Naive thymus-derived CD4-positive, alpha-beta T cell (primary cell): ENCODE measurements at regions of chr19 and their contacts with region 1.

Region 1: DNA sequence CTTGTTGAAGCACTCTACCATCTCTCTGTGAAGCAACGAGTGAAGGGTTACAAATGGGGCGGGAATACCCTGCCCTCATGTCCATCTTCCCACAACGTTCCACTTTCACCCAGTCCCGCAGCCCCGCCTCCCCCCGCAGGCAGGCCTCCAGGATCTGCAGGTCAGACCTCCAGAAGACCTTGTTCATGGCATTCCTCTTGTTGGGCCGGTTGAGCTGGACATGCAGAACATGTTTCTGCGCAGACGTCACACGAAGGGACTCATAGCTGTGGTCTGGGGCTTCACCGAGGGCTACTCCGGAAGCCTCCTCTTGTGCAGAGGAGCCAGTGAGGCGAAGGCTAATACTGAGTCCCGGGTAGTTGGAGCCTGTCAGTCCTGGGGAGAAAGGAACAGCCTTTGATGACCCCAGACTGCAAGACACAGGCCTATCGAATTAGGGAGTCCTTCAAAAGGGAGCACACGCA is 420 bp downstream of the ECH1 start:
- DNase-seq: peak in 1 of 9 donors; percentile 48
- ATAC-seq: peak; percentile 20
- H3K4me3 ChIP-seq: peak overlapping the region; percentile 80
- H3K4me3 Mint-ChIP-seq: peak overlapping the region; percentile 90 to 97 (median 94)
- H3K27ac ChIP-seq: peak overlapping the region; percentile 84
- H3K27ac Mint-ChIP-seq: peak overlapping the region; percentile 78 to 97 (median 92)
- H3K4me1 ChIP-seq: peaks cover 12 to 21% of the 10 kb centered on the region in 2 donors
- H3K4me1 Mint-ChIP-seq: peaks cover 14 to 54% (median 38%) of the 10 kb centered on the region in 7 donors
- H3K27me3 ChIP-seq: no peaks in the 10 kb centered on the region
- H3K27me3 Mint-ChIP-seq: no peaks in the 10 kb centered on the region

Region 2: GRCh38 chr19:38618590-38619360 is 212.4 kb before region 1 on chr19 and contains the start of gene EIF3K:
- CTCF ChIA-PET with region 1: interaction called, 3 read pairs
- POLR2A ChIA-PET with region 1: no interaction called
- intact Hi-C with region 1: loop called in 1 of 2 experiments (anchors 1 kb)
- DNase-seq: peak; percentile 94 to 99 (median 96)
- ATAC-seq: peak; percentile 86
- H3K4me3 ChIP-seq: peak within 1 kb of the TSS; percentile 96
- H3K4me3 Mint-ChIP-seq: peak within 1 kb of the TSS; percentile 95 to 100 (median 98)
- H3K27ac ChIP-seq: peak within 1 kb of the TSS; percentile 99
- H3K27ac Mint-ChIP-seq: peak within 1 kb of the TSS; percentile 89 to 100 (median 97)
- H3K4me1 ChIP-seq: peaks cover 33 to 40% of the 10 kb centered on the region in 2 donors
- H3K4me1 Mint-ChIP-seq: peaks cover 38 to 61% (median 44%) of the 10 kb centered on the region in 7 donors
- H3K27me3 ChIP-seq: no peaks in the 10 kb centered on the region
- H3K27me3 Mint-ChIP-seq: no peaks in the 10 kb centered on the region
- total RNA-seq, gene EIF3K: 294 to 405 (median 337) TPM

Region 3: DNA sequence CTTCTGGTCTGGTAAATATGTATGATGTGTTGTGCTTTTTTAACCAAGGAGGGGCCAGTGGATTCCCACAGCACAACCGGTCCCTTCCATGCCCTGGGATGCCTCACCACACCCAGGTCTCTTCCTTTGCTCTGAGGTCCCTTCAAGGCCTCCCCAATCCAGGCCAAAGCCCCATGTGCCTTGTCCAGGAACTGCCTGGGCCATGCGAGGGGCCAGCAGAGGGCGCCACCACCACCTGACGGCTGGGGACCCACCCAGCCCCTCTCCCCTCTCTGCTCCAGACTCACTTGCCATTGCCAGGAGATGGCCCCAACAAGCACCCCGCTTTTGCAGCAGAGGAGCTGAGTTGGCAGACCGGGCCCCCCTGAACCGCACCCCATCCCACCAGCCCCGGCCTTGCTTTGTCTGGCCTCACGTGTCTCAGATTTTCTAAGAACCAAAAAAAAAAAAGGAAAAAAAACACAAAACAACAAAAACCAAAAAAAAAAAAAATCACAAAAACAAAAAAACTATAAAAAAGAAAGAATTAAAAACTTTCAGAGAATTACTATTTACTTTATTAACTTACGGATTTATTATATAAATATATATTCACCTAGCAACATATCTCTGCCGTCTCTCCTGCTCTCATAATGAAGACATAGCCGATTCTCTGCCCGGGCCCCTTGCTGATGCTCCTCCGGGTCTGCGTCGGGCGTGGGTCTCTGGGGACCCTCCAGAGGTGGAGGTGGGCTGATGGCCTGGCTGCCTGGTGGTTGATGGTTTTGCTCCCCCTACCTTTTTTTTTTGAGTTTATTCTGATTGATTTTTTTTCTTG is 101.3 kb before region 1 on chr19:
- CTCF ChIA-PET with region 1: no interaction called
- POLR2A ChIA-PET with region 1: no interaction called
- intact Hi-C with region 1: loop called (anchors 2 to 5 kb)
- DNase-seq: peak; percentile 58 to 83 (median 73)
- ATAC-seq: peak; percentile 78
- H3K4me3 ChIP-seq: no peak overlapping the region
- H3K4me3 Mint-ChIP-seq: no peak overlapping the region
- H3K27ac ChIP-seq: no peak overlapping the region
- H3K27ac Mint-ChIP-seq: peak overlapping the region in 3 of 9 donors; percentile 23 to 48 (median 30)
- H3K4me1 ChIP-seq: peaks cover 9 to 10% of the 10 kb centered on the region in 2 donors
- H3K4me1 Mint-ChIP-seq: peaks cover 5 to 39% (median 13%) of the 10 kb centered on the region in 7 donors
- H3K27me3 ChIP-seq: no peaks in the 10 kb centered on the region
- H3K27me3 Mint-ChIP-seq: no peaks in the 10 kb centered on the region

Region 4: DNA sequence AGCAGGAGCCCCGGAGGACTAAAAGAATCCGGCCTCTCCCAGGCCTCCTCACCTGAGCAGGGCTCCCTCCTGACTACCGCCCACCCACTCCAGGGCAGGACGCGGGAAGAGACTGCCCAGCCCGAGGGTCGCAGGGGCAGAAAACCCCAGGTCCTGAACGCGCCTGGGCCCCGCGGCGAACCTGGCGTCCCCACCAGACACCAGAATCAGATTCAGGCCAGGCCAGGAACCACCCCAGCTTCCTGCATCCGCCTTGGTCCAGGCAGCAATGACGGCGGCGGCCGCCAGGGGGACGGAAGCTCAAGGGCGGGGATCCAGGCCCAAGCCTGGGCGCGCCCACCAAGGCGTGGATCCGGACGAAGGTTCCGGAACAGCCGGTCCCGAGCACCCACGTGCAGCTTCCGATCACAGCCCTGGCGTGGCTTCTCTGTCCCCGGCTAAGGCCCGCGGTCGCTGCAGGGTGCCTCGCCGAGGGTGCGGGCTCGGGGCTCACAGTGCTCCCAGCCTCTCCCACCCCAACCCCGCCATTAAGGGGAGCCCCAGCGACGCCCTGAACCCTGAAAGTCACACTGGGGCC is 61.5 kb before region 1 on chr19:
- CTCF ChIA-PET with region 1: no interaction called
- POLR2A ChIA-PET with region 1: interaction called, 6 read pairs
- intact Hi-C with region 1: loop called (anchors 2 to 5 kb)
- DNase-seq: peak; percentile 81 to 97 (median 86)
- ATAC-seq: peak; percentile 93
- H3K4me3 ChIP-seq: peak overlapping the region; percentile 33
- H3K4me3 Mint-ChIP-seq: peak overlapping the region; percentile 30 to 74 (median 61)
- H3K27ac ChIP-seq: peak overlapping the region; percentile 52
- H3K27ac Mint-ChIP-seq: peak overlapping the region; percentile 56 to 90 (median 83)
- H3K4me1 ChIP-seq: peaks cover 0 to 5% of the 10 kb centered on the region in 2 donors
- H3K4me1 Mint-ChIP-seq: peaks cover 0 to 10% (median 6%) of the 10 kb centered on the region in 7 donors
- H3K27me3 ChIP-seq: no peaks in the 10 kb centered on the region
- H3K27me3 Mint-ChIP-seq: no peaks in the 10 kb centered on the region

Region 5: GRCh38 chr19:38849860-38850435 is 18.8 kb after region 1 on chr19 and contains the start of gene HNRNPL:
- CTCF ChIA-PET with region 1: interaction called, 4 read pairs
- POLR2A ChIA-PET with region 1: interaction called, 34 read pairs
- intact Hi-C with region 1: loop called (anchors 1 kb)
- DNase-seq: peak; percentile 99 to 100 (median 100)
- ATAC-seq: peak; percentile 78
- H3K4me3 ChIP-seq: peak within 1 kb of the TSS; percentile 81
- H3K4me3 Mint-ChIP-seq: peak within 1 kb of the TSS; percentile 88 to 99 (median 96)
- H3K27ac ChIP-seq: peak within 1 kb of the TSS; percentile 96
- H3K27ac Mint-ChIP-seq: peak within 1 kb of the TSS; percentile 94 to 100 (median 99)
- H3K4me1 ChIP-seq: peaks cover 24 to 41% of the 10 kb centered on the region in 2 donors
- H3K4me1 Mint-ChIP-seq: peaks cover 30 to 67% (median 50%) of the 10 kb centered on the region in 7 donors
- H3K27me3 ChIP-seq: no peaks in the 10 kb centered on the region
- H3K27me3 Mint-ChIP-seq: peaks cover 0 to 5% (median 0%) of the 10 kb centered on the region in 5 donors
- total RNA-seq, gene HNRNPL: 339 to 539 (median 505) TPM

Region 6: DNA sequence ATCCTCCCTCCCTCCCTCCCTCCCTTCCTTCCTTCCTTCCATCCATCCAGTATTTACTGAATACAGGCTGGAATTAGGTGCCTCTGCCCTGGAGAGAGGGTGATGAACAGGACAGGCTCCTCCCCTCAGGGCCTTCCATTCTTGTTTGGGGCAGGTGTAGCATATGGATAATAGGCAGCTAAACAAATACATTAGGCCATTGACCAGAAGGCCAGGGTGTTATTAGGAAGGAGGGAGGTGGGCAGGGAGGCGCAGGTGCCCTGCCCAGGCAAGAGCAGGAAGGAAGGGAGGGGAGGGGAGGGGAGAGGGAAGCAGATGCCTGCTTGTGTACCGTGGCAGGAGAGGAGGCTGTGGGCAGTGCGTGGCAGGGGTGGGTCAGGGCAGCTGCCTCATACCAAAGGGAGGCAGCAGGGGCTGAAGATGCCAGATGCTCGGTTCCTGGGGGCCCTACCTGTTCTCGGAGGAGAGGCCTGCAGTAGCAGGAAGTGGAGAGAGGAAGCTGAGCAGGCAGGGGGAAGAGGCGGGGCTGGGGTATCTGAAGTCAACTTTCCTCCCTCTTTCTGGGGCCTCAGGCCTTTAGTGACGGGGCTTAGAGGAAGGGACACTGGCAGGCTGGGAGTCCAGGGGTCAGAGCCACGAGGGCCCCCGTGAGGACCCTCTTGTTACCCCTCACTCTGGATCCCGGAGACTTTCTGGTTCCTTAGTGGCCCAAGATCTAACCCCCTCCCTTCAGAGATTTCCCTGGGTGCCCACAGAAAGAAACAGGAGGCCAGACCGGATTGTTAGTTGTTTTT is 46.8 kb after region 1 on chr19 and contains the start of gene RINL:
- CTCF ChIA-PET with region 1: interaction called, 5 read pairs
- POLR2A ChIA-PET with region 1: interaction called, 9 read pairs
- intact Hi-C with region 1: loop called in 1 of 2 experiments (anchors 2 kb)
- DNase-seq: peak; percentile 41 to 78 (median 74)
- ATAC-seq: peak; percentile 94
- H3K4me3 ChIP-seq: peak within 1 kb of the TSS; percentile 60
- H3K4me3 Mint-ChIP-seq: peak within 1 kb of the TSS; percentile 58 to 98 (median 88)
- H3K27ac ChIP-seq: peak within 1 kb of the TSS; percentile 93
- H3K27ac Mint-ChIP-seq: peak within 1 kb of the TSS; percentile 95 to 99 (median 97)
- H3K4me1 ChIP-seq: peaks cover 22 to 30% of the 10 kb centered on the region in 2 donors
- H3K4me1 Mint-ChIP-seq: peaks cover 15 to 47% (median 30%) of the 10 kb centered on the region in 7 donors
- H3K27me3 ChIP-seq: no peaks in the 10 kb centered on the region
- H3K27me3 Mint-ChIP-seq: no peaks in the 10 kb centered on the region
- total RNA-seq, gene RINL: 32.8 to 75.9 (median 64.0) TPM